Tibial artery (tissue), 4 donors: ENCODE measurements at regions of chr1 and their contacts with region 1.

Region 1: GRCh38 chr1:47738560-47739182 is 258.5 kb downstream of the TRABD2B start:
- DNase-seq: no peak
- H3K4me3 ChIP-seq: no peak overlapping the region
- H3K27ac ChIP-seq: no peak overlapping the region
- H3K4me1 ChIP-seq: peaks cover 0 to 8% (median 5%) of the 10 kb centered on the region in 4 donors
- H3K27me3 ChIP-seq: no peaks in the 10 kb centered on the region
- CTCF ChIP-seq: peak; percentile 71 to 81

Region 2: DNA sequence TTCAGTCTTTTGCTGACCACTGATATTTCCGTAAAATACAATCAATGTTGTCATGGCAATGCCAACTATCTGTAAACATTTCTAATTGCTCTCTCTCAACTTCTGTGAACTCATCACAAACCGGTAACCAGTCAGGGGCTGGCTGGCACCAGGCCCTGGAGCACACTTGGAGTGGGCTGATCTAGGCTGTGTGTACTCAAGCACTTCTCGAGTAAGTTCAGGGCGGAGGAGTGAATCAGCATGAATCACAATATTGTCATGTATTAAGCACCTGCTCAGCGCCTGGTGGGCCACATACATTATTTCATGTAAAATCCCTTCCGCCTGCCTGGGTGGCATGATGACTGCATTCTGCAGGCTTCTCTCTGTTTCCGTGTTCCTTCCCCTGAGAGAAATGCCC is 88.5 kb before region 1 on chr1:
- intact Hi-C with region 1: no loop called
- DNase-seq: peak; percentile 19 to 64
- H3K4me3 ChIP-seq: no peak overlapping the region
- H3K27ac ChIP-seq: peak overlapping the region in 1 of 2 donors; percentile 15
- H3K4me1 ChIP-seq: peaks cover 0 to 39% (median 23%) of the 10 kb centered on the region in 4 donors
- H3K27me3 ChIP-seq: no peaks in the 10 kb centered on the region
- CTCF ChIP-seq: no peak

Region 3: GRCh38 chr1:48055876-48056764 is 317.4 kb after region 1 on chr1:
- intact Hi-C with region 1: loop called (anchors 5 kb)
- DNase-seq: no peak
- H3K4me3 ChIP-seq: no peak overlapping the region
- H3K27ac ChIP-seq: no peak overlapping the region
- H3K4me1 ChIP-seq: peaks cover 0 to 42% (median 27%) of the 10 kb centered on the region in 4 donors
- H3K27me3 ChIP-seq: no peaks in the 10 kb centered on the region
- CTCF ChIP-seq: no peak

Region 4: DNA sequence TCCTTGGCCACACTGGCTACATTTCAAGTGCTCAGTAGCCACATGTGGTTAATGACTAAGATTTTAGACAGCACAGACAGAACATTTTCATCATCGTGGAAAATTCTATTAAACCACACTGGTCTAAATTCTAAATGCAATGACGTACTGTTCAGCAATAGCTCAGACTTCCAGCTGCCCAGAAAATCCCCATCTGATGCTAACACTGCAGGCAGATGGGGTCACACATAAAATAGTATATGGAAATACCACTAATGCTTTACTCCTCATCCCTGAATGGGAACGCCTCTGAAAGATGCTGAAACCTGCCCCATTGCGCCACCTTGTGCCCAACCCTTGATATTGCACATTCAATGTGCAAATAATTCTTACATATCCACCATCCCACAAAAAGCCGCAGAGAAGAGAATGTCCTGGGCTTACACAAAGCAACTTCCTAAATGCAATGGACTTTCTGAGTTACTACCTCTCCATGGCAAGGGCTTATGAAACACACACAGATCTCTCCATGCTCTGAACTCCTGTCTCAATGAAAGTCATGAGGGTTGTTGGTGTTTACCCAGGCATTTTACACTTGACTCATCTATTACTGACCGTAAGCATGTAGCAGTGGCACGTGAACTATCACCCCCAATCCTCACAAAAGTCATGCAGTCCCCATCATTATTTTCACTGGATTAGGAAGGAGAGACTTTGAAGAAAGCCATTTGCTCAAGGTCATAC is 463.5 kb after region 1 on chr1:
- intact Hi-C with region 1: loop called (anchors 5 kb)
- DNase-seq: peak; percentile 69 to 80
- H3K4me3 ChIP-seq: no peak overlapping the region
- H3K27ac ChIP-seq: peak overlapping the region in 1 of 2 donors; percentile 3
- H3K4me1 ChIP-seq: peaks cover 0 to 12% (median 8%) of the 10 kb centered on the region in 4 donors
- H3K27me3 ChIP-seq: no peaks in the 10 kb centered on the region
- CTCF ChIP-seq: peak; percentile 78 to 80